ENCODE measurements at regions of chr19 and their contacts with region 1.

Region 1: GRCh38 chr19:3035542-3036118 is 6.5 kb upstream of the TLE2 start:
- DNase-seq: peak; percentile 98
- ATAC-seq: peak; percentile 95
- H3K4me3 ChIP-seq: peak overlapping the region; percentile 90
- H3K27ac ChIP-seq: peak overlapping the region; percentile 71
- H3K4me1 ChIP-seq: peaks cover 16% of the 10 kb centered on the region
- H3K27me3 ChIP-seq: no peaks in the 10 kb centered on the region; a peak in 1 of 4 replicates
- CTCF ChIP-seq: no peak
- EP300 ChIP-seq: no peak
- POLR2A ChIP-seq: peak; percentile 78
- RAD21 ChIP-seq: no peak

Region 2: GRCh38 chr19:2977001-2977685 is 58.5 kb before region 1 on chr19 and contains the start of gene TLE6:
- CTCF ChIA-PET with region 1: interaction called, 4 read pairs
- POLR2A ChIA-PET with region 1: interaction called, 7 read pairs
- RAD21 ChIA-PET with region 1: interaction called, 12 read pairs
- SMC1A ChIA-PET with region 1: interaction called, 5 read pairs
- in situ Hi-C with region 1: no loop called
- intact Hi-C with region 1: no loop called
- DNase-seq: peak; percentile 87
- ATAC-seq: peak; percentile 99
- H3K4me3 ChIP-seq: peak within 1 kb of the TSS; percentile 90
- H3K27ac ChIP-seq: peak within 1 kb of the TSS; percentile 58
- H3K4me1 ChIP-seq: peaks cover 11% of the 10 kb centered on the region
- H3K27me3 ChIP-seq: no peaks in the 10 kb centered on the region
- CTCF ChIP-seq: no peak
- EP300 ChIP-seq: no peak
- POLR2A ChIP-seq: peak; percentile 78
- RAD21 ChIP-seq: no peak
- polyA plus RNA-seq, gene TLE6: 2.7 to 3.4 TPM

Region 3: DNA sequence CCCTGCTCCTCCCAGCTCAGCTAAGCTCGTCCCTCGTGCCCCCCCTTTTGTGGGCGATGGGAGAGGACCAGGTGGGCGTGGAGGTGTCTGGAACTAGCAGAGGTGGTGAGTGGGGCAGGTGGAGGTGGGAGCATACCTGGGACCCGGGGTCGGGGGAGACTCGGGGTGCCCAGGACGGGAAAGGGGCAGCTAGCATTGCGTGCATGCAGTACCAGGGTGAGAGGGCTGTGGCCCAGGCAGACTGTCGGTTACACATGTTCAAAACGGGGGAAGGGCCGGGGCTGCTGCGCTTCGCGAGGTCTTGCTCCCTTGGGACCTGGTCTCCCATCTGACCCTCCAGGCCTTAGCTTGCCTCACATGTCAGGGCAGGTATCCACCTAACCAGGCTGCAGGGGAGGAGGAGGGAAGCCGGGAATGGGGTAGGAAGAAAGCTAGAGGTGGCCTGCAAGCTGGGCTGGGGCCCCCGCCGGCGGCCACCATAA is 17.6 kb after region 1 on chr19:
- CTCF ChIA-PET with region 1: interaction called, 6 read pairs
- POLR2A ChIA-PET with region 1: interaction called, 11 read pairs
- RAD21 ChIA-PET with region 1: interaction called, 5 read pairs
- SMC1A ChIA-PET with region 1: no interaction called
- in situ Hi-C with region 1: no loop called
- intact Hi-C with region 1: no loop called
- DNase-seq: no peak
- ATAC-seq: peak; percentile 29; the same call in 2 of the 3 replicates
- H3K4me3 ChIP-seq: no peak overlapping the region
- H3K27ac ChIP-seq: no peak overlapping the region
- H3K4me1 ChIP-seq: no peaks in the 10 kb centered on the region
- H3K27me3 ChIP-seq: peaks cover 0 to 3% of the 10 kb centered on the region in 2 experiments; a peak in 1 of 4 replicates
- CTCF ChIP-seq: no peak
- EP300 ChIP-seq: no peak
- POLR2A ChIP-seq: 0 out of 2 replicates have a peak, but pooled peaks have one; percentile 15
- RAD21 ChIP-seq: no peak

Region 4: DNA sequence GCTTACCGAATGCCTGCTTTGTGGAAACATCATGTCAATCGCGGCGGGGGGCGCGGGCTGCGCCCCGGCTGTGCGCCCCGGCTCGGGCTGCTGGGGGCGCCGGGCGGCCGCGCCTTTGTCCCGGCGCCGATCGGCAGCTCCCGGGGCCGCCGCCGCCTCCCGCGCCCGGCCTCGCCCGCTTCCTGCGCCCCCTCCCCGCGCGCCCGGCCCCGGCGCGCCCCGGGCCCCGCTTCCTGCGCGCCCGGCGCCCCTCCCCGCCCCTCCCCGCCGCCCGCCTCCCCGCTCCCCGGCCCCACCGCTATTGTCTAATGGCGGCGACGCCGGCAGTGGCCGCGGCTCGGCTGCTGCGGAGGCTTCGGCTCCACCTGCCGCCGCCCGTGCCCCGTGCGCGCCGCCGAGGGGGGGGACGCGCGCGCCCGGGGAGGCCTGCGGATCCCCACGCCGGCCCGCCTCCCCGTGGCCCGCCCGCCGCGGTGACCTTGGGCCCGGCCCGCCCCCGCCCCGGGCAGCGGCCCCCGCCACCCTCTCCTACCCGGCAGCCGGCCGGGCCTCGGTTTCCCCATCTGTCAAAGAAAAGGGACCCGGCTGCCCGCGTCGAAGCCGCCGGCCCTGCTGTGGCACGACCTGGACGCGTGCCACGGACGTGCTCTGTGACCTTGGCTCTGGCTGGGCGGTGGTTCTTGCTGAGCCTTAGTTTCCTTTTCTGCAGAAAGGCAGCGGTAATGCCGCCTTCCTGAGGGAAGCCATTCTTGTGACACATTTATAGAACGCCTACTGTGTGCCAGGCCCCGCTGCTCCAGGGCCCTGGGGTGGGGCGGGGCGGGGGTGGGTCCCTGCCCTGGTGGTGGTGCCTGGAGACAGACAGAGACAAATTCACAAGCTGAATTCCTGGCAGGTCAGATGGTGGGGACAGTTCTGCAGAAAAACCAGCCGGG is 26.8 kb after region 1 on chr19 and contains the start of gene TLE5:
- CTCF ChIA-PET with region 1: interaction called, 11 read pairs
- POLR2A ChIA-PET with region 1: interaction called, 13 read pairs
- RAD21 ChIA-PET with region 1: interaction called, 13 read pairs
- SMC1A ChIA-PET with region 1: interaction called, 8 read pairs
- in situ Hi-C with region 1: no loop called
- intact Hi-C with region 1: no loop called
- DNase-seq: no peak
- ATAC-seq: peak; percentile 32
- H3K4me3 ChIP-seq: peak within 1 kb of the TSS; percentile 88
- H3K27ac ChIP-seq: peak within 1 kb of the TSS; percentile 87
- H3K4me1 ChIP-seq: peaks cover 36% of the 10 kb centered on the region
- H3K27me3 ChIP-seq: no peaks in the 10 kb centered on the region
- CTCF ChIP-seq: no peak
- EP300 ChIP-seq: no peak
- POLR2A ChIP-seq: peak; percentile 78
- RAD21 ChIP-seq: no peak
- polyA plus RNA-seq, gene TLE5: 2.5 to 13.0 TPM

Measured in GM12878 (cell line).